ENCODE measurements at regions of chr3 and their contacts with region 1.

Region 1: DNA sequence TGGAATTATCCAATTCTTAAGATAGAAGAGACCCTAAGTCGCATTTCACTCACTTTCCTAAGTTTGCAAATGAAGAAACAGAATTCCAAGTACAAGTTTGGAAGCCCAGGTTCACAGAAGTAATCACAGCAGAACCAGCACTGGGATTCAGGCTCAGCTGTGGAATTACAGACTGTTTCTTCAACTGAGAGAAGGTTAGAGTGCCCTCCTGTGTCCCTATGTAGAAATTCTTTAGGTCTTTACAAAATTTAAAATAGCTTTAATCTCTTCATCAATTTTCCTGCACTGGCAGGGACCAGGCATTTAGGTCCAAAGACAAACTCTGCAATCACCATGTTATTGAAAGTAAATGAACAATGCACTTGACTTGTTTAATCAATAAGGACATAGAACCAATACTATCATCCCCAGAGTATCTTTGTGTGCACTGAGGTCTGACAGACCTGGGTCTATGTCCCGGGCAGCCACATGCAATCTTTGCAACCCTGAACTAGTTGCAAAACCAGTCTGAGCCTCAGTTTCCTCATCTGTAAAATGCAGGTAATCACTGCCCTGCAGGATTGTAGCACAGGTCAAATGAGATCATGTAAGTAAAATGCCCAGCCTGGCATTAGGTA is 96.3 kb upstream of the ZBED2 start:
- DNase-seq: no peak
- H3K4me3 ChIP-seq: no peak overlapping the region
- CTCF ChIP-seq: peak; percentile 43

Region 2: DNA sequence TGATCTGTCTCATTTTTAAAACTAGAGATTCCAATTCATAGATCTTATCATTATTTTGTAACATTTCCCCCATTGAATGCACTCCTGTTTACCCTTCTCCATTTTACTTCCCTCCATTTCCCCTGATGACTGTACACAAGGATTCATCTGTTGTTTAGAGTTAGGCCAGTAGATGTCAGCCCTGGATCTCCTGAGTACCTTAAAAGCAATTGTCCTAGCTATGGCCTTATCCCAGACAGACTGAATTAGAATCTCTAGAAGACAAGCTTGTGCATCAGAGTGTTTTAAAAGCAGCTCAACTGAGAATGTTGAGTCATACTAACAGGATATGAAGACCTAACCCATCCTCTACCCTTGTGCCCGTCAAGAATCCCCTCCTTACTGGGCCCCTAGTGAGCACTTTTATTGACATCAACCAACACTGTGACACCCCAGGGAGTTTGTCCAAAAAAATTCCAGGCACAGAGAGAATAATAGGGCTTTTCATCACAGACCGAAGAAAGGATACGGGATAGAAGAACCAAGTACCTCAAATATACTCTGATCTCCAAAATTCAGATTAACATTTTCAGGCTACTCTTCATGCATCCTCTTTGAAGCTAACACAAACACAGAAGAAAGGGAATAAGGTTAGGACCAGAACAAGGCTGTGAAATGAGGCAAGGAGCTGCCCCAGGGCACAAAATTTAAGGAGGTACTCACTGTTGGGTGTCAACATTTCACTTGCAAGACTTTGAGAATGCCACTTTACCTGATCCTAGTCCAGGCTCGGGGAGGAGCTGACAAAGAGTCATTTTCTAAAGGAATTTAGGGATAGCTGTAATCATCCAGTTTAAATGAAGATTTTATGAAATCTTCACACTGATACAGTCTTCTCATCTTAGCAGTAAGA is 113.4 kb before region 1 on chr3:
- CTCF ChIA-PET with region 1: interaction called, 348 read pairs
- POLR2A ChIA-PET with region 1: interaction called, 4 read pairs
- DNase-seq: peak; percentile 70
- H3K4me3 ChIP-seq: no peak overlapping the region
- CTCF ChIP-seq: peak; percentile 71

Region 3: GRCh38 chr3:111585214-111585613 is 106.2 kb before region 1 on chr3:
- CTCF ChIA-PET with region 1: interaction called, 348 read pairs
- POLR2A ChIA-PET with region 1: no interaction called
- DNase-seq: no peak
- H3K4me3 ChIP-seq: no peak overlapping the region
- CTCF ChIP-seq: no peak

Region 4: GRCh38 chr3:111594205-111594604 is 97.2 kb before region 1 on chr3:
- CTCF ChIA-PET with region 1: interaction called, 20 read pairs
- POLR2A ChIA-PET with region 1: no interaction called
- DNase-seq: peak; percentile 47
- H3K4me3 ChIP-seq: no peak overlapping the region
- CTCF ChIP-seq: no peak

Region 5: DNA sequence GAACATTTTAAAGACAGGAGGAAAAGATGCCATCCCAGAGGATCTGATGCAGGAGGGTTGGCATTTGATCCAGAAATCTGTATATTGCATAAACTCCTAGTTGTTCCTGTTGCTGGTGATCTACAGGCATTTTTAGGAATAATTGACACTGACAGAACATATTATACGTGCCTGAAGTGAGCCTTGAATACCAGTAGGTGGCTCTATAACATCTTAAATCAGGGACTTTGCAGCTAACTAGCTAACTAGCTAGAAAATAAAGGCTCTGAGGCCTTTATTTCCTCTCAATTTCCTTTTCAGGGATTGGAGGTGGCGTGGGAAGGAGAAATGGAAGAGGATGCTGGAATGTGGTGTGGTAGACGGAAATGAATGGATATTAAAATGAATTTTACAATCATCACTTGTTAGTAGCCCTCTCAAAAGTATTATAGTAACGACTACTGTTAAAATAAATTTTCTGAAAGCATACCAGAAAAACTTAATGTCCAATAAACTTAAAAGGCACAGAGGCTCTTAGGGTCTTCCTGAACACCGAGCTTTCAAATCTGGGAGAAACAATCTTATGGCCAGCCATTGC is 22.4 kb before region 1 on chr3:
- CTCF ChIA-PET with region 1: interaction called, 15 read pairs
- POLR2A ChIA-PET with region 1: no interaction called
- DNase-seq: no peak
- H3K4me3 ChIP-seq: no peak overlapping the region
- CTCF ChIP-seq: peak; percentile 58

Region 6: GRCh38 chr3:111712294-111713167 is 21.1 kb after region 1 on chr3:
- CTCF ChIA-PET with region 1: interaction called, 67 read pairs
- POLR2A ChIA-PET with region 1: no interaction called
- DNase-seq: no peak
- H3K4me3 ChIP-seq: no peak overlapping the region
- CTCF ChIP-seq: no peak

Measured in AG04449 (cell line).